Activated naive CD4-positive, alpha-beta T cell treated with anti-CD3 and anti-CD28 coated beads for 36 hours (primary cell): ENCODE measurements at regions of chr16 and their contacts with region 1.

Region 1: GRCh38 chr16:3099732-3100499 is 822 bp upstream of the ZSCAN10 start:
- DNase-seq: peak; percentile 97
- H3K4me3 Mint-ChIP-seq: peak overlapping the region; percentile 69
- H3K27ac Mint-ChIP-seq: no peak overlapping the region
- H3K4me1 Mint-ChIP-seq: peaks cover 36% of the 10 kb centered on the region
- H3K27me3 Mint-ChIP-seq: no peaks in the 10 kb centered on the region

Region 2: GRCh38 chr16:3074860-3075522 is 24.9 kb before region 1 on chr16:
- CTCF ChIA-PET with region 1: interaction called, 21 read pairs
- intact Hi-C with region 1: loop called (anchors 2 kb)
- DNase-seq: peak; percentile 94
- H3K4me3 Mint-ChIP-seq: peak overlapping the region; percentile 71
- H3K27ac Mint-ChIP-seq: peak overlapping the region; percentile 98
- H3K4me1 Mint-ChIP-seq: peaks cover 77% of the 10 kb centered on the region
- H3K27me3 Mint-ChIP-seq: no peaks in the 10 kb centered on the region

Region 3: GRCh38 chr16:3112058-3112880 is 12.4 kb after region 1 on chr16 and contains the start of gene ZNF205:
- CTCF ChIA-PET with region 1: interaction called, 14 read pairs
- intact Hi-C with region 1: no loop called
- DNase-seq: no peak
- H3K4me3 Mint-ChIP-seq: peak within 1 kb of the TSS; percentile 18
- H3K27ac Mint-ChIP-seq: no peak within 1 kb of the TSS
- H3K4me1 Mint-ChIP-seq: peaks cover 2% of the 10 kb centered on the region
- H3K27me3 Mint-ChIP-seq: peaks cover 7% of the 10 kb centered on the region
- total RNA-seq, gene ZNF205: 0.25 TPM in 1 of 2 experiments, not detected in the other